Common myeloid progenitor, CD34-positive (primary cell): ENCODE measurements at regions of chr3 and their contacts with region 1.

Region 1: GRCh38 chr3:45043728-45044299 is 17.7 kb downstream of the CLEC3B start:
- DNase-seq: peak; percentile 31 to 47 (median 43)
- H3K4me3 ChIP-seq: no peak overlapping the region
- H3K27ac ChIP-seq: no peak overlapping the region
- H3K4me1 ChIP-seq: peaks cover 0 to 17% (median under 1%) of the 10 kb centered on the region in 4 experiments
- H3K27me3 ChIP-seq: no peaks in the 10 kb centered on the region

Region 2: GRCh38 chr3:45333549-45333948 is 289.7 kb after region 1 on chr3:
- CTCF ChIA-PET with region 1: interaction called, 11 read pairs
- POLR2A ChIA-PET with region 1: no interaction called
- DNase-seq: peak; percentile 20 to 63 (median 58)
- H3K4me3 ChIP-seq: no peak overlapping the region
- H3K27ac ChIP-seq: no peak overlapping the region
- H3K4me1 ChIP-seq: peaks cover 0 to 10% (median 5%) of the 10 kb centered on the region in 4 experiments
- H3K27me3 ChIP-seq: no peaks in the 10 kb centered on the region

Region 3: DNA sequence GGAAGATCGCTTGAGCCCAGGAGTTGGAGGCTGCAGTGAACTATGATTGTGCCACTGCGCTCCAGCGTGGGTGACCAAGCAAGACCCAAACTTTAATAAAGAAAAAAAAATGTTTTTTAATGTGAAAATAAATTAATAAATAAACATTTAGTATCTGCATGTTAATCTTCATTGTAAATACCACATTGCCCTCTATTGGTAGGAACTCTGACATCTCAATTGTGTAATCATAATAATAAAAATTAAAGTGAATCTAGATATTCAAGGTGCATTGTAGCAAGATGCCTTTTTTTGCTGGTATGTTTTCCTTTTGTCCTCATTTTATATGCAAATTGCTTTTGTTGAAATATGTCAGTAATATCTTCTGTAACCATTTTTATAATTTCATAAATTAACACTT is 455.7 kb after region 1 on chr3:
- CTCF ChIA-PET with region 1: interaction called, 37 read pairs
- POLR2A ChIA-PET with region 1: no interaction called
- DNase-seq: peak; percentile 47 to 71 (median 69)
- H3K4me3 ChIP-seq: no peak overlapping the region
- H3K27ac ChIP-seq: no peak overlapping the region
- H3K4me1 ChIP-seq: peaks cover 0 to 11% (median 7%) of the 10 kb centered on the region in 4 experiments
- H3K27me3 ChIP-seq: no peaks in the 10 kb centered on the region

Region 4: GRCh38 chr3:45507820-45508317 is 464.1 kb after region 1 on chr3:
- CTCF ChIA-PET with region 1: interaction called, 31 read pairs
- POLR2A ChIA-PET with region 1: interaction called, 4 read pairs
- DNase-seq: peak; percentile 17 to 63 (median 61)
- H3K4me3 ChIP-seq: no peak overlapping the region
- H3K27ac ChIP-seq: no peak overlapping the region
- H3K4me1 ChIP-seq: peaks cover 0 to 12% (median 8%) of the 10 kb centered on the region in 4 experiments
- H3K27me3 ChIP-seq: no peaks in the 10 kb centered on the region